ENCODE measurements at regions of chrX and their contacts with region 1.

Region 1: DNA sequence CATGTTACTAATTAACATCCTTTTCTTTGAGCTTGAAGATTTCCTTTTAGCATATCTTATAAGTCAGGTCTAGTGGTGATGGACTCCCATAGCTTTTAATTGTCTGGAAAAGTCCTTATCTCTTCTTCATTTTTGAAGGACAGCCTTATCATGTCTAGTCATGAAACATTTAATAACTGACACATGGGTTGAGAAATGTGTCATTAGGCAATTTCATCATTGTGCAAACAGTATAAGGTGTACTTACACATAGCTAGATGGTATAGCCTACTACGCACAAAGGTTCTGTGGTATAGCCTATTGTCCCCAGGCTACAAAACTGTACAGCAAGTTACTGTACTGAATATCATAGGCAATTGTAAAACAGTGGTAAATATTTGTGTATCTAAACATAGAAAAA is 34.5 kb upstream of the ALG13 start:
- DNase-seq: no peak
- H3K4me3 ChIP-seq: no peak overlapping the region
- H3K27ac ChIP-seq: no peak overlapping the region
- H3K4me1 ChIP-seq: no peaks in the 10 kb centered on the region
- H3K27me3 ChIP-seq: no peaks in the 10 kb centered on the region
- CTCF ChIP-seq: no peak
- EP300 ChIP-seq: no peak
- POLR2A ChIP-seq: no peak

Region 2: GRCh38 chrX:111035256-111035655 is 611.3 kb before region 1 on chrX:
- intact Hi-C with region 1: loop called in 1 of 4 experiments (anchors 5 kb)
- DNase-seq: no peak
- H3K4me3 ChIP-seq: no peak overlapping the region
- H3K27ac ChIP-seq: no peak overlapping the region
- H3K4me1 ChIP-seq: no peaks in the 10 kb centered on the region
- H3K27me3 ChIP-seq: no peaks in the 10 kb centered on the region
- CTCF ChIP-seq: no peak
- EP300 ChIP-seq: no peak
- POLR2A ChIP-seq: no peak

Measured in ovary (tissue), 10 donors.